Posterior cingulate gyrus (tissue), 11 donors: ENCODE measurements at regions of chr14 and their contacts with region 1.

Region 1: DNA sequence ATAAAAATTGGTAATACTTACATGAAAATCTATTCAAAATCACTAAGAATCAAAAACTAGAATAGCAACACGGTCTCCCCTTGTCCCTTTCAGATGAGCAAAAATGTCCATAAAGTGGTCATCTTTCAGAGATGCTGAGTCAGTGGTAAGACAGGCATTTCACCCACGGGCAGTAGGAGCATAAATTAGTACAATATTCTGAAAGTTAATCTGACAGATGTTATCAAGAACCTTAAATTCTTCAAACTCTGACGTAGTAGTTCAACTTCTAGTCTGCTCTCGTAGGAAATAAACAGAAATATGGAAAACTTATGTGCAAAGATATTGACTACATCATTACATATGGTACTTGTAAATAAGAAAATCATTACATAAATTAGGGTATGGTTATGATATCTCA is 33.1 kb upstream of the GNPNAT1 start:
- DNase-seq: no peak

Region 2: DNA sequence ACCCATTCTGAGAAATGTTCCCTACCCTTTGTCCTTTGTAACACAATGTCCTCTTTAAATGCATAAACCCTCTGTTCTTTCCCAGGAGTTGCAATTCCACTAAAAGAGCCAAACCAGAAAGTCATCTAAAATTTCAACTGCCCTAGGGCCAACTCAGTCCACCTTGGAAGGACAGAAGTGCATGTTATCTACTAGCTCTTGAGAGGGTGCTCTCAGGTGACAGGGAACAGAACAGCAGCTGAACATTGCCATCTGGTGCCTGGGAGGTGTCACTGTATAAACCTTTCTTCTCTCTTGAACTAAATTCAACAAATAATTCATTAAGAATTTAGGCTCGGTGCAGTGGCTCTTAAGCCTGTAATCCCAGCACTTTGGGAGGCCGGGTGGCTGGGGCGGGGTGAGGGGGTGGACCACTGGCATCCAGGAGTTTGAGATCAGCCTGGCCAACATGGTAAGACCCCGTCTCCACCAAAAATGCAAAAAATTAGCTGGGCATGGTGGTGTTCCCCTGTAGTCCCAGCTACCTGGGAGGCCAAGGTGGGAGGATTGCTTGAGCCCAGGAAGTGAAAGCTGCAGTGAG is 136.6 kb after region 1 on chr14:
- intact Hi-C with region 1: loop called (anchors 5 kb)
- DNase-seq: peak in 4 of 10 donors; percentile 13 to 48 (median 36)

Region 3: DNA sequence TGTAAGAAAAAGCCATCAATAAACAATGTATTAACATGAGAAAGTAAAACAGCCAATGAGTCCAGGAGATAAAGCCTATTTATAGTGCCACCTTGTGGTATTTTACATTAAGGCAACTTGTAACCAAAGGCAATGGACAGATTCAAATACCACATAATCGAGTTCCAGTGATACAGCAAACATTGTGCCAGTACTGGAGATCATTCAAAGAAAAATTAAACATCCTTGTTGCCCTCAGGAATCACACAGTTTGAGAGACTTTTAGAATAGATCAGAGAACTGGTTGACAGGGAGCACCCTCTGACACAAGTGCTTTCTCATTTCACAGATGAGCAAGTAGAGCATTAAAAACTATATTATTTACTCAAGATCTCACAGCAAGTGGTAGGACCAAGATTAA is 230.5 kb after region 1 on chr14:
- intact Hi-C with region 1: loop called (anchors 1 kb)
- DNase-seq: no peak

Region 4: DNA sequence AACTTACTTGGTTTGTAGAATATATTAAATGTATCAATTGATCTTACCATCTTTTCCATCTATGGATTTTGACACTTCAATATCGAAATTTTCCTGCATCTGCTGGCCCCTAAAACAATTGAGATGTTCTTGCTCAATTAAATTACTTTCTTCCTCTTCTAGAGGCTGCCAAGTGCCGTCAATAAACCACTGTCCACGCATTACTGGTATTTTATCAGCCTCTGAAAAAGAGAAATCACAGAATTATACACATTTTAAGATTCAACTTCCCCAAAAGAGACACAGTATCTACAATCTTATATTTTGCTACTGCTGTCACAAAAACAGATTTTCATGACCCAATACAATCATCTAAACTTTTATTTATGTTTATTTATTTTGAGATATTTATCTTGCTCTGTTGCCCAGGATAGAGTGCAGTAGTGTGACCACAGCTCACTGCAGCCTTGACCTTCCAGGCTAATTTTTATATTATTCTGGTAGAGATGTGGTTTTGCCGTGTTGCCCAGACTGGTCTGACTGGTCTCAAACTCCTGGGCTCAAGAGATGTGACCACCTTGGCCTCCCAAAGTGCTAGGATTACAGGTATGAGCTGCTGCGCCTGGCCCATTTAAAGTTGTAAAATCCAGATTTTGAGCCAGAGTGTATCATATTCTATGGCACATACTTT is 279.3 kb after region 1 on chr14:
- intact Hi-C with region 1: no loop called
- DNase-seq: no peak

Region 5: DNA sequence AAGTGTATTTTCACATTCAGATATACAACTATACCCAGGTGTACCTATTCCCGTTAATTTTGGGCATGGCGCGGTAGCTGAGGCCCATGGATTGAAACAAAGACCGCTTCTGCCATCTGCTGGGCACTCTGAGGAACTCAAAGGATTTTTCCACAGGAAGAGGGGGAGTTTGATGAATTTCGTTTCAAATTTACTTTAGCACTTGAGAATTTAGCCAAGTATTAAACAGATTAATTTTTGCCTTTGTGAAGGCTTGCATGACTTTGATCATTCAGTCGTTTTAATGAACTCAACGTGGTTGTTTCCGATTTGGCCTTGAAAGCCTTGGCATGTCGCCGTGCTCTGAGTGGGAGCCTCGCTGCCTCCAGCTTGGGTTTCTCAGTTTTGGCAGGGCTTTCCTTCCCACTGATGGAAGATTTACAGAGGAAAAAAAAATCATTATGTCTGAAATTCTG is 481.8 kb after region 1 on chr14:
- intact Hi-C with region 1: loop called (anchors 2 kb)
- DNase-seq: peak; percentile 43 to 93 (median 63)